H1 (cell line): ENCODE measurements at regions of chr2 and their contacts with region 1.

Region 1: DNA sequence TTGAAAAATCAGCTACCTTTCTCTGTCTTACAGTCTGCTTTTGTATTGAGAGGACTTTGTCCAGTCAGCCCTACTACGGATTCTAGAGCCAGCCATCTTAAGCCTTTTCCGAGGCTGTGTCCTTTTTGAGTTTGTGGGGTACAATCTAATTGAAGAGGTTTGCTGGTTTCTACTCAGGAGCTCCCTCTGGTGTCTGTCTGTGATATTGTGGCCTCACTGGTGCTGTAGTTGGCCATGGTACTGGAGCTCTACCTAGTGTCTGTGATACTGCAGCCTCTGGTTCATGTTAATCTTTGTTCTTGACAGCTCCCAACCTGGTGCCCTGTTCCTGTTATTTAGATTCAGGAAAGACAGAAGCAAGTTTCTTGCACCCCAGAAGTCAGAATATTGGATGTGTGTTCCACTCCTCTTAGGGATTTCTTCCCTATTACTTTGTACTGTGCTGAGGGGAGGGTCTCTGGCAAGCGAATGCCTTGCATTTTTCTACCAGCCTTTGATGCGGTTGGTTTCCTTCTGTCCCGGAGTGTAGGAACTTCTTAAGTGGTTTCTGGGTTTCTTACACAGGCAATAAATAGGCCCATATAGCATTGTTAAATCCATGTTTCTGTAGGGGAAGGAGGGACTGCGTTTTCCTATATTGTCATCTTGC is 78.5 kb downstream of the ACSL3 start:
- DNase-seq: peak; percentile 59 to 94
- H3K4me3 ChIP-seq: no peak overlapping the region
- H3K27ac ChIP-seq: no peak overlapping the region
- H3K4me1 ChIP-seq: peaks cover 0 to 6% (median 1%) of the 10 kb centered on the region in 4 experiments; a peak in 3 of 7 replicates
- H3K27me3 ChIP-seq: no peaks in the 10 kb centered on the region
- CTCF ChIP-seq: peak; percentile 56 to 99 (median 96)
- EP300 ChIP-seq: no peak
- POLR2A ChIP-seq: no peak
- RAD21 ChIP-seq: peak; percentile 84 to 86

Region 2: GRCh38 chr2:222760301-222760897 is 178.9 kb before region 1 on chr2:
- CTCF ChIA-PET with region 1: no interaction called
- POLR2A ChIA-PET with region 1: no interaction called
- DNase-seq: no peak
- H3K4me3 ChIP-seq: no peak overlapping the region
- H3K27ac ChIP-seq: no peak overlapping the region
- H3K4me1 ChIP-seq: no peaks in the 10 kb centered on the region
- H3K27me3 ChIP-seq: no peaks in the 10 kb centered on the region; a peak in 2 of 7 replicates
- CTCF ChIP-seq: no peak
- EP300 ChIP-seq: no peak
- POLR2A ChIP-seq: no peak
- RAD21 ChIP-seq: no peak

Region 3: DNA sequence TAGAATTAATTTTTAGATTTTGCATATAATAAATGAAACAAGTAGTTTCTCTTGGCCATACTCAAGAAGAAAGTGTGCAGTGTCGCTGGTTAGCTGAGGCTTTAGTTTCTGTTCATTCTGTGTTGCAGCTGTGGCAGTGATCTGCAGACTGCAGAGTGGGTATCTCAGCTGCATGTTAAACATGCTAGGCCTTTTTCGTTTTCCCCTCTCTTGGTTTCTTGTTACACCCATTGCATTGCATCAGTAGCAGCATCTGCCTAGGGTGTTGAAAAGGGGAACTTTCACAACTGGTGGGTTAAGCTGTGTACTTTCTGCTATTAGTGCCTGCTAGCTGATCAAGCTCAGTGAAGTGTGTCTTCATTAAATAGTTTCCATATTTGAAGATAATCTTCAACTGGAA is 27.2 kb before region 1 on chr2:
- CTCF ChIA-PET with region 1: interaction called, 15 read pairs
- POLR2A ChIA-PET with region 1: no interaction called
- DNase-seq: no peak
- H3K4me3 ChIP-seq: no peak overlapping the region
- H3K27ac ChIP-seq: no peak overlapping the region
- H3K4me1 ChIP-seq: peaks cover 3 to 19% (median 13%) of the 10 kb centered on the region in 4 experiments; a peak in 5 of 7 replicates
- H3K27me3 ChIP-seq: no peaks in the 10 kb centered on the region
- CTCF ChIP-seq: no peak
- EP300 ChIP-seq: no peak
- POLR2A ChIP-seq: no peak
- RAD21 ChIP-seq: no peak

Region 4: GRCh38 chr2:222922019-222922800 is 17.1 kb before region 1 on chr2:
- CTCF ChIA-PET with region 1: interaction called, 16 read pairs
- POLR2A ChIA-PET with region 1: no interaction called
- DNase-seq: no peak
- H3K4me3 ChIP-seq: no peak overlapping the region
- H3K27ac ChIP-seq: no peak overlapping the region
- H3K4me1 ChIP-seq: peaks cover 0 to 2% (median 0%) of the 10 kb centered on the region in 4 experiments; a peak in 1 of 7 replicates
- H3K27me3 ChIP-seq: no peaks in the 10 kb centered on the region
- CTCF ChIP-seq: no peak
- EP300 ChIP-seq: no peak
- POLR2A ChIP-seq: no peak
- RAD21 ChIP-seq: no peak

Region 5: GRCh38 chr2:222950638-222951285 is 11.4 kb after region 1 on chr2:
- CTCF ChIA-PET with region 1: interaction called, 32 read pairs
- POLR2A ChIA-PET with region 1: no interaction called
- DNase-seq: no peak
- H3K4me3 ChIP-seq: no peak overlapping the region
- H3K27ac ChIP-seq: no peak overlapping the region
- H3K4me1 ChIP-seq: peaks cover 0 to 4% (median 0%) of the 10 kb centered on the region in 4 experiments; a peak in 2 of 7 replicates
- H3K27me3 ChIP-seq: no peaks in the 10 kb centered on the region
- CTCF ChIP-seq: no peak
- EP300 ChIP-seq: no peak
- POLR2A ChIP-seq: no peak
- RAD21 ChIP-seq: no peak

Region 6: GRCh38 chr2:222959336-222959735 is 20.0 kb after region 1 on chr2:
- CTCF ChIA-PET with region 1: interaction called, 26 read pairs
- POLR2A ChIA-PET with region 1: no interaction called
- DNase-seq: peak in 1 of 2 experiments; percentile 71
- H3K4me3 ChIP-seq: no peak overlapping the region
- H3K27ac ChIP-seq: no peak overlapping the region
- H3K4me1 ChIP-seq: no peaks in the 10 kb centered on the region; a peak in 1 of 7 replicates
- H3K27me3 ChIP-seq: no peaks in the 10 kb centered on the region
- CTCF ChIP-seq: peak; percentile 5 to 42 (median 38)
- EP300 ChIP-seq: no peak
- POLR2A ChIP-seq: no peak
- RAD21 ChIP-seq: peak; percentile 42 to 53

Region 7: GRCh38 chr2:223084873-223085272 is 145.5 kb after region 1 on chr2:
- CTCF ChIA-PET with region 1: no interaction called
- POLR2A ChIA-PET with region 1: no interaction called
- DNase-seq: peak in 1 of 2 experiments; percentile 25
- H3K4me3 ChIP-seq: no peak overlapping the region
- H3K27ac ChIP-seq: no peak overlapping the region
- H3K4me1 ChIP-seq: peaks cover 0 to 3% (median 0%) of the 10 kb centered on the region in 4 experiments; a peak in 1 of 7 replicates
- H3K27me3 ChIP-seq: no peaks in the 10 kb centered on the region
- CTCF ChIP-seq: no peak
- EP300 ChIP-seq: no peak
- POLR2A ChIP-seq: no peak
- RAD21 ChIP-seq: no peak